Activated CD4-positive, alpha-beta memory T cell treated with anti-CD3 and anti-CD28 coated beads, Interleukin-2, amount 10 ng/mL, durations not matched to agents 7 days and 5 days (primary cell): ENCODE measurements at regions of chr2 and their contacts with region 1.

Region 1: GRCh38 chr2:174634130-174635014 is 36.8 kb upstream of the WIPF1 start:
- DNase-seq: peak; percentile 64
- H3K4me3 Mint-ChIP-seq: peak overlapping the region; percentile 84
- H3K27ac Mint-ChIP-seq: peak overlapping the region; percentile 93
- H3K4me1 Mint-ChIP-seq: peaks cover 66% of the 10 kb centered on the region
- H3K27me3 Mint-ChIP-seq: no peaks in the 10 kb centered on the region

Region 2: GRCh38 chr2:174300089-174300488 is 334.3 kb before region 1 on chr2:
- CTCF ChIA-PET with region 1: no interaction called
- POLR2A ChIA-PET with region 1: no interaction called
- DNase-seq: no peak
- H3K4me3 Mint-ChIP-seq: no peak overlapping the region
- H3K27ac Mint-ChIP-seq: no peak overlapping the region
- H3K4me1 Mint-ChIP-seq: no peaks in the 10 kb centered on the region
- H3K27me3 Mint-ChIP-seq: peaks cover 27% of the 10 kb centered on the region

Region 3: GRCh38 chr2:174492963-174493431 is 141.4 kb before region 1 on chr2:
- CTCF ChIA-PET with region 1: no interaction called
- POLR2A ChIA-PET with region 1: interaction called, 11 read pairs
- DNase-seq: peak; percentile 69
- H3K4me3 Mint-ChIP-seq: peak overlapping the region; percentile 69
- H3K27ac Mint-ChIP-seq: peak overlapping the region; percentile 97
- H3K4me1 Mint-ChIP-seq: peaks cover 61% of the 10 kb centered on the region
- H3K27me3 Mint-ChIP-seq: no peaks in the 10 kb centered on the region

Region 4: GRCh38 chr2:174623690-174624089 is 10.7 kb before region 1 on chr2:
- CTCF ChIA-PET with region 1: interaction called, 9 read pairs
- POLR2A ChIA-PET with region 1: interaction called, 364 read pairs
- DNase-seq: no peak
- H3K4me3 Mint-ChIP-seq: no peak overlapping the region
- H3K27ac Mint-ChIP-seq: peak overlapping the region; percentile 37
- H3K4me1 Mint-ChIP-seq: peaks cover 75% of the 10 kb centered on the region
- H3K27me3 Mint-ChIP-seq: no peaks in the 10 kb centered on the region

Region 5: DNA sequence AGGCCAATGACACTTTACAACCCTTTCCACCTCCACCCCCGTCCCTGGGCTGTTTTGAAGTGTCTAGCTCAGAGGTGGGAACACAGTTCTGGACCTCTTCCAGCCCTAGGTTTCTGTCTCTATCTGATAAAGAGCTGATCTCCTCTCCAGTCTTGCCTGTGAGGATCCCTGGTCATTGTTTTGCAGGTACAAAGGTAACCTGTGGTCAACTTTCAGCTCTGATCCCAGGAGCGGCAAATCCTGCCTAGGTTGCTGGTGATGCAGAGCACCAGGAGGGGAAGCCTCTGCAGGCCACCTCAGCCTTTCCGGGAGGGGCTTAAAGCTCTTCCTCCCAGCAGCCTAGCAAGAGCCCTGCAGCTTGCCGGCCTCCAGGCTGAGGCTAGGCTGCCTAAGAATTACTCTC is 33.0 kb after region 1 on chr2:
- CTCF ChIA-PET with region 1: interaction called, 4 read pairs
- POLR2A ChIA-PET with region 1: interaction called, 14 read pairs
- DNase-seq: no peak
- H3K4me3 Mint-ChIP-seq: no peak overlapping the region
- H3K27ac Mint-ChIP-seq: no peak overlapping the region
- H3K4me1 Mint-ChIP-seq: peaks cover 10% of the 10 kb centered on the region
- H3K27me3 Mint-ChIP-seq: no peaks in the 10 kb centered on the region

Region 6: DNA sequence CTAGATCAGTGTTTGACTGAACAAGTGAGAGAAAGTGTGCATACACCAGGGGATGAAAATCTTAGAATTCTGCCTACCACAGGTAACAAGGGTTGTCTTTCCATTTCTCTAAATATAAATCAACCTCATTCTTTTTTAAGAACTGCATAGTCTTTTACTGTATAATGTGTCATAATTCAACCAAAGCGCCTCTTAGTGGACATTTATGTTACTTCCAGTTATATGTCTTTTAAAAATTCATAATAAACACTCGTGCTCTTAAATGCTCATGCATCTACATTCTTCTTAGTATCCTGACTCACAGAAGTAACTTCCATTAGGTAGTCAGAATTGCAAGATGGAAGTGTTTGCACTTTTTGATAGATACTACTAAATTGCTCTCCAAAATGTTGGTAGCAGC is 53.7 kb after region 1 on chr2:
- CTCF ChIA-PET with region 1: interaction called, 33 read pairs
- POLR2A ChIA-PET with region 1: interaction called, 73 read pairs
- DNase-seq: no peak
- H3K4me3 Mint-ChIP-seq: no peak overlapping the region
- H3K27ac Mint-ChIP-seq: no peak overlapping the region
- H3K4me1 Mint-ChIP-seq: peaks cover 36% of the 10 kb centered on the region
- H3K27me3 Mint-ChIP-seq: no peaks in the 10 kb centered on the region